OCI-LY7 (cell line): ENCODE measurements at regions of chr11 and their contacts with region 1.

Region 1: DNA sequence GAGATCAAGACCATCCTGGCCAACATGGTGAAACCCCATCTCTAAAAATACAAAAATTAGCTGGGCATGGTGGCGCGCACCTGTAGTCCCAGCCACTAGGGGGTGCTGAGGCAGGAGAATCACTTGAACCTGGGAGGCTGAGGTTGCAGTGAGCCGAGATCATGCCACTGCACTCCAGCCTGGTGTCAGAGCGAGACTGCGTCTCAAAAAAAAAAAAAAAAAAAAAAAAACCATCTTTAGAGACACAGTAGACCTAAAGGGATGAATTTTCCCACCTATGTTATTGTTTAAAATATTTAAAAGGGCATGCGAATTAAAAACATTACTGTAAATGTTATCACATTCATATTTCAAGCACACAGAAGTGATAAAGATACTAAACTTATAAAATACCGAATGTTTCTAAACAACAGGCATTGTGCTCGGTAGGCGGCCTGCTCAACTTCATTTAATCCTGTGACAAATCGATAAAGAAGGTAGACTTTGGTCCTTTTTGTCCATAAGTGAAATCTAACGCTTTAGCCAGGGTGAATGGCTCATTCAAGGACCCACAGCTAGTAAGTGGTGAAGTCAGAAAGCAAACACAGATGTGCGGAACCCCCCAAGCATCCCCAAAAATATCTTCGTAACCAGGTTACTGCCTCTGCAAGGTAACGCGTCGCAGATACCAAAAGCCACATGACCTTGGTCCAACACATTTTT is 16.1 kb downstream of the NCAPD3 start:
- DNase-seq: peak; percentile 46
- H3K4me3 ChIP-seq: no peak overlapping the region
- H3K27ac ChIP-seq: no peak overlapping the region
- H3K4me1 ChIP-seq: no peaks in the 10 kb centered on the region
- CTCF ChIP-seq: peak; percentile 81

Region 2: DNA sequence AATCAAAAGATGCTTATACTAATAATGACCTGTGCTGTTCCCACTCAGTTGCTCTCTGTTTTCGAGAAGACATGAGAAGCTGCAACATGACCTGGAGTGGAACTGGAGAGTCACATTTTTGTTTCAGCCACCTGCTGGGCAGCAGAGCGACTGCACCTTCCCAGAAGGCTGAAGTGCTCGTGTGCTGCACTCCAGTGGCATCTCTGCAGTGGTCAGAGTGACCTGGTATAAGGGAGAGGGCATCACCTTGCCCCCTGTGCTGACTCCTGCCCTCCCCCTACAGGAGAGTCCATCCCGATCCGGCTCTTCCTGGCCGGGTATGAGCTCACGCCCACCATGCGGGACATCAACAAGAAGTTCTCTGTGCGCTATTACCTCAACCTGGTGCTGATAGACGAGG is 37.0 kb after region 1 on chr11:
- CTCF ChIA-PET with region 1: no interaction called
- POLR2A ChIA-PET with region 1: interaction called, 3 read pairs
- intact Hi-C with region 1: loop called (anchors 1 kb)
- DNase-seq: peak; percentile 52
- H3K4me3 ChIP-seq: no peak overlapping the region
- H3K27ac ChIP-seq: no peak overlapping the region
- H3K4me1 ChIP-seq: no peaks in the 10 kb centered on the region
- CTCF ChIP-seq: peak; percentile 76

Region 3: DNA sequence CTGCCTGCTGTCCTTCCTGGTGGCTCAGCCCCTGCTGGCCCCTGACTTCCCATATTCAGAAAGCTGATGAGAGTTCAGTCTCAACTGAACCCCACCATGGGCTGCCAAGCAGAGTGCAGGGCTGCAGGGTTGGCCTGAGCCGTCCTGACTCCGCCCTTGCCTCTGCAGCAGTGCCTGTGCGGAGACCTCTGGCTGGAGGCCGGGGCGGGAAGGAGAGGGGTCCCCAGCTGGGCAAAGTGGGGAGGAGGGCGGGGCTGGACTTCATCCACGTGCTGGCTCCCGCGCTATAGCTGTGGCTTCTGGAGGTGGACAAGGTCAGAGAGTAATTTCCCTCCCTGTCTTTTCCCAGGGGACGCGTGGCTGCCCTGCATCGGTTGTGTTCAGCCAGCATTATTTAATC is 82.1 kb after region 1 on chr11:
- CTCF ChIA-PET with region 1: no interaction called
- POLR2A ChIA-PET with region 1: no interaction called
- intact Hi-C with region 1: no loop called
- DNase-seq: no peak
- H3K4me3 ChIP-seq: no peak overlapping the region
- H3K27ac ChIP-seq: no peak overlapping the region
- H3K4me1 ChIP-seq: no peaks in the 10 kb centered on the region
- CTCF ChIP-seq: no peak